MCF 10A (cell line): ENCODE measurements at regions of chr14 and their contacts with region 1.

Region 1: DNA sequence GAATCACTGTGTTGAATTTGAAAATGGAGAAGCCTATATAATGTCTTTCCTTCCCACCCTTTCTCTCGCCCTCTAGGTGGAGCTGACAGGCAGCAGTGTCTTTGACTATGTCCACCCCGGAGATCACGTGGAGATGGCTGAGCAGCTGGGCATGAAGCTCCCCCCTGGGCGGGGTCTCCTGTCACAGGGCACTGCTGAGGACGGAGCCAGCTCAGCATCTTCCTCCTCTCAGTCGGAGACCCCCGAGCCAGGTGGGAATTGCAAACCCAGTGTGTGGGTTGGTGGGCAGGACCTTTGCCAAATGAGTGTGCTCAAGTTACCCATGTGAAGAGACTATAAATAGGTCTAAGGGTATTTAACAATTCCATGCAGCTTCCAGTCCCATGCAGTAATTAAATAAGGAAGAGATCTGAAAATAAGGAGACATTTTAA is 274.7 kb downstream of the EGLN3 start:
- DNase-seq: peak; percentile 61
- H3K4me3 Mint-ChIP-seq: no peak overlapping the region
- H3K27ac Mint-ChIP-seq: no peak overlapping the region
- H3K4me1 Mint-ChIP-seq: peaks cover 11% of the 10 kb centered on the region
- H3K27me3 Mint-ChIP-seq: no peaks in the 10 kb centered on the region
- CTCF ChIP-seq: no peak

Region 2: DNA sequence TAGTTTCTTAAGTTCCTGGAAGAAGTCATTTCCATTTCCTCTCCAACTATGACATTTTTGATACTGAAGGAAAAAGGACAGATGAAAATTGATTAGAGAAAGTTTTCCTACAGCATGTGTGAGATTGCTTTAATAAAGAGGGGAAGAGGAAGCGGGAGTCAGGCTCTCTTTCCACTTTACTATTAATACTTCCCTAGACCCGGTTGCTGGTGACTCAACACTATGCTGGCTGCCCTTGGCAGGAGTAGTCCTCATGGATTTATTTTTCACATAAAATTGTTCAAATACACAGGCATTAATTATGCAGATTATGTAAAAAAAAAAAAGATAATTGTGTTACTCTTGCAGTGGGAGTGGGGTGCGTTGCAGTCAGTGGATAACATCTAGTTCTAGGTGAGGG is 18.7 kb before region 1 on chr14:
- CTCF ChIA-PET with region 1: interaction called, 3 read pairs
- POLR2A ChIA-PET with region 1: no interaction called
- intact Hi-C with region 1: loop called (anchors 2 kb)
- DNase-seq: no peak
- H3K4me3 Mint-ChIP-seq: no peak overlapping the region
- H3K27ac Mint-ChIP-seq: no peak overlapping the region
- H3K4me1 Mint-ChIP-seq: no peaks in the 10 kb centered on the region
- H3K27me3 Mint-ChIP-seq: no peaks in the 10 kb centered on the region
- CTCF ChIP-seq: no peak

Region 3: GRCh38 chr14:33742166-33742565 is 66.0 kb after region 1 on chr14:
- CTCF ChIA-PET with region 1: no interaction called
- POLR2A ChIA-PET with region 1: no interaction called
- intact Hi-C with region 1: no loop called
- DNase-seq: no peak
- H3K4me3 Mint-ChIP-seq: no peak overlapping the region
- H3K27ac Mint-ChIP-seq: no peak overlapping the region
- H3K4me1 Mint-ChIP-seq: peaks cover 5% of the 10 kb centered on the region
- H3K27me3 Mint-ChIP-seq: no peaks in the 10 kb centered on the region
- CTCF ChIP-seq: no peak